ENCODE measurements at regions of chr1 and their contacts with region 1.

Region 1: DNA sequence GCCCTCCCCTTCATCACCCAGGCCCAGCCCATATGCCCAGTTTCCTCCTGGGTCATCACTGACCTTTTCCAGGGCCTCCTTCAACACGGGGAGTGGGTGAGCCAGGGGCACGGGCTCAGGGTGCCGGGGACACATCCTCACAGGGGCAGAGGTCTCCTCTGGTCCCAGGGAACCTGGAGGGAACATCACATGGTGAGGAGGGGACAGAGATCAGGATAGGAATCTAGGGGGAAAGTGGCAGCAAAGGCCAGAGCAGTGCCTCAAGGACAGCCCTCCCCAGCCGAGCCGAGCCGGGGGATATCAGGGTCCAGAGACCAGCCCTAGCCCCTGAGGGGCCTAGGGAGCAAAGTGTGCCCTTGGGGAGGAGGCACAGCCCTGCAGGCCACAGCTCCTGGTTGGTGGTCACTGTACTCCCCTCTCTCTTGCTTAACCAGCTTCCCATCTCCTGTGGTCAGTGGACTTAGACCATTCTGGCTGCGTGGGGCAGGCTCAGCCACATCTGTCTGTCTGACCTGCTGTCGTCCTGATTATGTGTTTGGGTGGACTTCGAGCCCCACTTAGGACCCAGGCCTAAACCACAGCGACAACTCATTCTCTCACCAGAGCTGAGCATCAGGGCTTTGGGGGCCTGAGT is 9.5 kb downstream of the LACTBL1 start:
- DNase-seq: no peak
- ATAC-seq: no peak; a peak in 1 of 6 replicates
- H3K4me3 ChIP-seq: no peak overlapping the region
- H3K27ac ChIP-seq: no peak overlapping the region
- H3K4me1 ChIP-seq: no peaks in the 10 kb centered on the region
- CTCF ChIP-seq: no peak
- EP300 ChIP-seq: no peak
- POLR2A ChIP-seq: no peak
- RAD21 ChIP-seq: no peak

Region 2: GRCh38 chr1:22665752-22666151 is 297.4 kb before region 1 on chr1:
- CTCF ChIA-PET with region 1: interaction called, 25 read pairs
- POLR2A ChIA-PET with region 1: no interaction called
- DNase-seq: peak; percentile 42 to 55
- ATAC-seq: peak; percentile 80 to 84
- H3K4me3 ChIP-seq: no peak overlapping the region
- H3K27ac ChIP-seq: no peak overlapping the region
- H3K4me1 ChIP-seq: no peaks in the 10 kb centered on the region
- CTCF ChIP-seq: peak; percentile 48; the same call in 2 of the 3 replicates
- EP300 ChIP-seq: no peak
- POLR2A ChIP-seq: no peak
- RAD21 ChIP-seq: peak; percentile 78 to 85

Region 3: DNA sequence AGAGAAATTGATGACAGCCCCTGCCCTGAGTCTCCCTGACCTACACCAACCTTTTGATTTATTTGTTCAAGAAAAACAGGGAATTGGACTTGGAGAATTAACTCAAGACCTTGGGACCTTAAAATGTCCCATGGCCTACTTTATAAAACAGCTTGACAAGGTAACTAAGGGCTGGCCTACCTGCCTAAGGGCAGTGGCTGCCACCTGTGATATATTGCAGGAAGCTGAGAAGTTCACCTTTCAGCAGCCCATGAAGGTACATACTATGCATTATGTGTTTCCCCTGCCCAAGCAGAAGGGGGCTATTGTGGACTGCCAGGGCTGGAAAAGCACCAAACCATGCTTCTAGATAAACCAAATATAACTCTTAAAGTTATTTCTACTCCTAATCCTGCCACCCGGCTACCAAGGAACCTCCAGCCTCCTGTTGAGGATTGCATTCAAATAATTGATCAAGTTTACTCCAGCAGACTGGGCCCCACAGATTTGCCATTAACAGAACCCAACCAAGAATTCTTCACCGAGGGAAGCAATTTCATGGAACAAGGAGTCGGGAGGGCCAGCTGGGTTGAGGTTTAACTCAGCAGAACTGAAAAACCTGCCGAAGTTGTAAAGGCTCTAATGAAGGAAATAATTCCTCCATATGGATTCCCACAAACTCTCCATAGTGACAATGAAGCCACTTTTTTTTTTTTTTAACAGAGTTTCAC is 18.7 kb before region 1 on chr1:
- CTCF ChIA-PET with region 1: interaction called, 13 read pairs
- POLR2A ChIA-PET with region 1: no interaction called
- DNase-seq: no peak
- ATAC-seq: no peak
- H3K4me3 ChIP-seq: no peak overlapping the region
- H3K27ac ChIP-seq: no peak overlapping the region
- H3K4me1 ChIP-seq: no peaks in the 10 kb centered on the region
- CTCF ChIP-seq: no peak
- EP300 ChIP-seq: no peak
- POLR2A ChIP-seq: no peak
- RAD21 ChIP-seq: no peak

Region 4: GRCh38 chr1:22952694-22953391 is 10.3 kb before region 1 on chr1:
- CTCF ChIA-PET with region 1: interaction called, 25 read pairs
- POLR2A ChIA-PET with region 1: no interaction called
- DNase-seq: no peak
- ATAC-seq: no peak
- H3K4me3 ChIP-seq: no peak overlapping the region
- H3K27ac ChIP-seq: no peak overlapping the region
- H3K4me1 ChIP-seq: no peaks in the 10 kb centered on the region
- CTCF ChIP-seq: no peak
- EP300 ChIP-seq: no peak
- POLR2A ChIP-seq: no peak
- RAD21 ChIP-seq: no peak

Measured in A549 (cell line).